Activated CD4-positive, alpha-beta T cell treated with anti-CD3 and anti-CD28 coated beads for 36 hours (primary cell): ENCODE measurements at regions of chr22 and their contacts with region 1.

Region 1: DNA sequence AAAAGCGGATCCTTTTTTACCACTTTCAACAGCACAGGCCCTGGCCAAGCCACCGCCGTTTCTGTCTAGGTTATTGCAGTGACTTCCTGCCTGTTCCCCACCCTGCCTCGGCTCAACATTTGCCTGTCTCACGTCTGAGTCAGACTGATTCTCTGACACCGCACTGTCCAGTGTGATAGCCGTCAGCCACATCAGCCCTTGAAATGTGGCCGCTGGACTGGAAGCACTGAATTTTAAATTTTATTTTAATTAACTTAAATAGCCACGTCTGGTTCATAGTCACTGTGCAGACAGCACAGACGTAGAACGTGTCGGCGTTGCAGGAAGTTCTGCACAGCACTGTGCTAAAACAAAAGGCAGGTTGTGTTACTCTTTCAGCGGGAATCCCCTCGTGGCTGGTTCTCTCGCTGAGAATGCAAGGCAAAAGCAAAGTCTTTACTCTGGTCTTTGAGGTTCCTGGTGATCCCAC is 56.3 kb upstream of the ADSL start:
- DNase-seq: peak; percentile 83
- ATAC-seq: peak; percentile 78
- H3K4me3 Mint-ChIP-seq: peak overlapping the region; percentile 63
- H3K27ac Mint-ChIP-seq: peak overlapping the region; percentile 98
- H3K4me1 Mint-ChIP-seq: peaks cover 68% of the 10 kb centered on the region
- H3K27me3 Mint-ChIP-seq: no peaks in the 10 kb centered on the region

Region 2: DNA sequence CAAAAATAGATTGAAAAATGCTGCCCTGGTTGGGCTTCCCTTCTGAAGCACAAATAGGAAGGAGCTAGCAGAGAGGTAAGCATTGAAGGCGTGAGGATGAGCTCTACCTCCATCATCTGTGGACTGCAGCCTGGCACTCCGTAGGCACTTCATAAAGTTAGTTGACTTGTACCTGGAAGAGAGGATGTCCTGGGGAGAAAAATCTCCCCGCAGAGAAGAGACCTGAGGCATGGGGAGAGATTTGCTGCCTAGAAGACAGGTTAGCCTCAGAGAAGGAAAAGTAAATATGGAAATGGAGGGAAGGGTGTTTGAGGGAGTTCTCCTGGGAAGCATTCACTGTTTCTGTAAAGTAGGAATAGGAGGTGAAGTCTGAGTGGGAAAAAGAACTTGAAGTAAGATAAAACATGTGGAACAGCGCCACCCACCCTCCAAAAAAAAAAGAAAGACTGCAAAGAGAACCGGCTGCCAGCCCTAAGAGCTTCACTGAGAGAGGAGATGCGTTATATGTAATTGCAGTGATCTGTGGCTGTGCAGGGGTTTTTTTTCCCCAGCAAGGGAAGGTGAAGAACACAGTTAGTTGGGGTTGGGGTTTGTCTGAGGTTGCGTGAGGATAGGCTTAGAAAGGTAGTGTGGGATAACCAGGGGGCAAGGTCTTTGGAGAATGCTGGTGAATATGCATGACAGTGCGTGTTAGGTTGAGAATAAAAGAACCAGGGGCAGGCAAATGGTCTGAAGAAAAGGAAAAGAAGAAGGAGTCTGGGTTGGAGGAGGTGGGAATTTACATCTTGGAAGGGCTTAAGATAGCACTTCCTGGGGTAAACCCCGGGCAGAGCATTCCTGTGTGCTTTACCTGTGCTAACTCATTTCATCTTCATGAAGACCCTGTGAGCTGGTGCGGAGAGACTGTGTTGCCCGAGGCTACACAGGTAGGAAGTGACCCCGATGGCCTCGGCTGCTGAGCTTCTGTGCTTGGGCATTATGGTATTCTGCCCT is 96.3 kb before region 1 on chr22:
- CTCF ChIA-PET with region 1: interaction called, 3 read pairs
- POLR2A ChIA-PET with region 1: interaction called, 11 read pairs
- intact Hi-C with region 1: no loop called
- DNase-seq: no peak
- ATAC-seq: no peak
- H3K4me3 Mint-ChIP-seq: no peak overlapping the region
- H3K27ac Mint-ChIP-seq: peak overlapping the region; percentile 72
- H3K4me1 Mint-ChIP-seq: peaks cover 86% of the 10 kb centered on the region
- H3K27me3 Mint-ChIP-seq: no peaks in the 10 kb centered on the region

Region 3: DNA sequence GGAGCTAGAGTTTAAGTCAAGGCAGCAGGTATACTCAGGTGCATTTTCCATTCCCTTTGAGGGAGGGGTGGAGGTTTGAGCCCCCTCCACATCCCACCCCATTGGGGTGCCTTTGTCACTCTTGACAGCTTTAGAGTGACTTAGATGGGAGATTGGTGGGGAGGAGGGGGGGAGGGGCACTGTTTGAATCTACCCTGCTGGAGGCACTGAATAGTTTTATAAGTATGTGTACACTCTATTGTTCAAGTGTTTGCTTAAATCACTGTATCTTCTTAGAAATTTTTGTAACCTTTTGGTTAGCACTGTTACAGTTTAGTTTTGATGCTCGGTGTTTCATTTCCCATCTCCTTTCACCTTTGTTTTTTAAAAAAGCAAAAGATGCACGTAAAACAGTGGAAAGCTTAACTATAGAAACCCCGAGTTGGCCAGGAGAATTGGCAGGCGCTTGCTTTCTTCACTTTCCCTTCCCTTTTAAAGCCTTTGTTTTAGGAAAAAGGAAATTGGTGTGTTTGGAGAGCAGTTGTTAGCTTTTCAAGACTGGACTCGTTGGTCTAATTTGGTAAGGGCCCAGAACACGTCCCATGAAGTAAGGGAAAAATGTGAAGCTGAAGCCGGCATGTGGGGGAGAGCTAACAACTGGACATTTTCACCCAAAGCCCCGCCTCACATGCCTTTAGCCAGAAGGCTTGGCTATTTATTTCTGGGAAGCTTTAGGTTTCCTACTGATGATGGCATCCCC is 69.5 kb before region 1 on chr22:
- CTCF ChIA-PET with region 1: no interaction called
- POLR2A ChIA-PET with region 1: no interaction called
- intact Hi-C with region 1: no loop called
- DNase-seq: no peak
- ATAC-seq: no peak
- H3K4me3 Mint-ChIP-seq: no peak overlapping the region
- H3K27ac Mint-ChIP-seq: peak overlapping the region; percentile 4
- H3K4me1 Mint-ChIP-seq: peaks cover 77% of the 10 kb centered on the region
- H3K27me3 Mint-ChIP-seq: no peaks in the 10 kb centered on the region

Region 4: DNA sequence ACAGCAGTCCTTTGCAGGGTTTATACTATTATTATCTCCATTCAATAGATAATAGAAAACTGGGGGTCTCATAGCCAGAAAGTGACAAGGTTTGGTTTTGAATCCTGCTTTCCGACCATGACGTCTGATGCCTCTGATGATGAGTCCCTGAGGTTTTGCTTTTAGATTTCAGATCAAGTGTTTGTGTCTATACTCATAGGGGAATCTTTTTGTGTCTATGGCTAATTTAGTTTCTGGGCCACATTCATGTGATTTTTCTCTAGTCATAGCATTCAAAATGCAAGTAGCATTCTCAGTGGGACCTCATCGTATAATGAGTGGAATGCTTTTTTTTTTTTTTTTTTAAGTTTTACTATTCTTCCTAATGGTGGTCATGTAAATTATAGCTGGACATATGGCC is 39.4 kb before region 1 on chr22:
- CTCF ChIA-PET with region 1: no interaction called
- POLR2A ChIA-PET with region 1: no interaction called
- intact Hi-C with region 1: loop called in 1 of 2 experiments (anchors 5 kb)
- DNase-seq: peak; percentile 66
- ATAC-seq: peak; percentile 86
- H3K4me3 Mint-ChIP-seq: no peak overlapping the region
- H3K27ac Mint-ChIP-seq: peak overlapping the region; percentile 69
- H3K4me1 Mint-ChIP-seq: peaks cover 71% of the 10 kb centered on the region
- H3K27me3 Mint-ChIP-seq: no peaks in the 10 kb centered on the region

Region 5: GRCh38 chr22:40323681-40324171 is 33.7 kb after region 1 on chr22:
- CTCF ChIA-PET with region 1: interaction called, 3 read pairs
- POLR2A ChIA-PET with region 1: no interaction called
- intact Hi-C with region 1: loop called in 1 of 2 experiments (anchors 2 kb)
- DNase-seq: peak; percentile 55
- ATAC-seq: no peak
- H3K4me3 Mint-ChIP-seq: peak overlapping the region; percentile 63
- H3K27ac Mint-ChIP-seq: peak overlapping the region; percentile 95
- H3K4me1 Mint-ChIP-seq: peaks cover 89% of the 10 kb centered on the region
- H3K27me3 Mint-ChIP-seq: no peaks in the 10 kb centered on the region